Breast epithelium (tissue), 4 donors: ENCODE measurements at regions of chr1 and their contacts with region 1.

Region 1: GRCh38 chr1:241376701-241377100 is 19.7 kb upstream of the RGS7 start:
- DNase-seq: no peak
- H3K4me3 ChIP-seq: no peak overlapping the region
- H3K27ac ChIP-seq: no peak overlapping the region
- H3K4me1 ChIP-seq: no peaks in the 10 kb centered on the region
- H3K27me3 ChIP-seq: no peaks in the 10 kb centered on the region
- CTCF ChIP-seq: no peak
- POLR2A ChIP-seq: no peak

Region 2: GRCh38 chr1:241574154-241574553 is 197.5 kb after region 1 on chr1:
- intact Hi-C with region 1: loop called (anchors 5 kb)
- DNase-seq: no peak
- H3K4me3 ChIP-seq: no peak overlapping the region
- H3K27ac ChIP-seq: no peak overlapping the region
- H3K4me1 ChIP-seq: no peaks in the 10 kb centered on the region
- H3K27me3 ChIP-seq: no peaks in the 10 kb centered on the region
- CTCF ChIP-seq: no peak
- POLR2A ChIP-seq: no peak